Naive thymus-derived CD4-positive, alpha-beta T cell (primary cell): ENCODE measurements at regions of chr4 and their contacts with region 1.

Region 1: GRCh38 chr4:151760712-151761527 is at the start of gene GATB:
- DNase-seq: peak; percentile 67 to 97 (median 93)
- ATAC-seq: peak; percentile 99
- H3K4me3 ChIP-seq: peak within 1 kb of the TSS; percentile 87
- H3K4me3 Mint-ChIP-seq: peak within 1 kb of the TSS; percentile 88 to 99 (median 98)
- H3K27ac ChIP-seq: peak within 1 kb of the TSS; percentile 69
- H3K27ac Mint-ChIP-seq: peak within 1 kb of the TSS; percentile 94 to 99 (median 98)
- H3K4me1 ChIP-seq: peaks cover 9 to 13% of the 10 kb centered on the region in 2 donors
- H3K4me1 Mint-ChIP-seq: peaks cover 7 to 24% (median 18%) of the 10 kb centered on the region in 7 donors
- H3K27me3 ChIP-seq: no peaks in the 10 kb centered on the region
- H3K27me3 Mint-ChIP-seq: peaks cover 0 to 8% (median 4%) of the 10 kb centered on the region in 5 donors
- total RNA-seq, gene GATB: 10.5 to 17.3 (median 14.2) TPM

Region 2: GRCh38 chr4:151015459-151016347 is 745.2 kb before region 1 on chr4:
- CTCF ChIA-PET with region 1: no interaction called
- POLR2A ChIA-PET with region 1: no interaction called
- intact Hi-C with region 1: loop called (anchors 1 to 2 kb)
- DNase-seq: peak; percentile 76 to 89 (median 87)
- ATAC-seq: peak; percentile 88
- H3K4me3 ChIP-seq: peak overlapping the region; percentile 99
- H3K4me3 Mint-ChIP-seq: peak overlapping the region; percentile 95 to 100 (median 99)
- H3K27ac ChIP-seq: peak overlapping the region; percentile 97
- H3K27ac Mint-ChIP-seq: peak overlapping the region; percentile 90 to 100 (median 98)
- H3K4me1 ChIP-seq: peaks cover 18 to 32% of the 10 kb centered on the region in 2 donors
- H3K4me1 Mint-ChIP-seq: peaks cover 20 to 34% (median 32%) of the 10 kb centered on the region in 7 donors
- H3K27me3 ChIP-seq: no peaks in the 10 kb centered on the region
- H3K27me3 Mint-ChIP-seq: no peaks in the 10 kb centered on the region

Region 3: GRCh38 chr4:151117371-151117962 is 643.5 kb before region 1 on chr4:
- CTCF ChIA-PET with region 1: no interaction called
- POLR2A ChIA-PET with region 1: no interaction called
- intact Hi-C with region 1: loop called in 1 of 2 experiments (anchors 5 kb)
- DNase-seq: peak in 8 of 9 donors; percentile 22 to 63 (median 54)
- ATAC-seq: peak; percentile 86
- H3K4me3 ChIP-seq: no peak overlapping the region
- H3K4me3 Mint-ChIP-seq: no peak overlapping the region
- H3K27ac ChIP-seq: no peak overlapping the region
- H3K27ac Mint-ChIP-seq: peak overlapping the region in 1 of 9 donors; percentile 59
- H3K4me1 ChIP-seq: no peaks in the 10 kb centered on the region
- H3K4me1 Mint-ChIP-seq: peaks cover 0 to 8% (median 6%) of the 10 kb centered on the region in 7 donors
- H3K27me3 ChIP-seq: no peaks in the 10 kb centered on the region
- H3K27me3 Mint-ChIP-seq: no peaks in the 10 kb centered on the region

Region 4: GRCh38 chr4:151990201-151990600 is 229.3 kb after region 1 on chr4:
- CTCF ChIA-PET with region 1: no interaction called
- POLR2A ChIA-PET with region 1: no interaction called
- intact Hi-C with region 1: loop called in 1 of 2 experiments (anchors 5 kb)
- DNase-seq: no peak
- ATAC-seq: no peak
- H3K4me3 ChIP-seq: no peak overlapping the region
- H3K4me3 Mint-ChIP-seq: peak overlapping the region in 4 of 10 donors; percentile 18 to 84 (median 76)
- H3K27ac ChIP-seq: no peak overlapping the region
- H3K27ac Mint-ChIP-seq: peak overlapping the region; percentile 77 to 92 (median 90)
- H3K4me1 ChIP-seq: peaks cover 48 to 51% of the 10 kb centered on the region in 2 donors
- H3K4me1 Mint-ChIP-seq: peaks cover 38 to 64% (median 56%) of the 10 kb centered on the region in 7 donors
- H3K27me3 ChIP-seq: no peaks in the 10 kb centered on the region
- H3K27me3 Mint-ChIP-seq: peaks cover 0 to 2% (median 0%) of the 10 kb centered on the region in 5 donors

Region 5: GRCh38 chr4:152255437-152256011 is 494.6 kb after region 1 on chr4:
- CTCF ChIA-PET with region 1: no interaction called
- POLR2A ChIA-PET with region 1: no interaction called
- intact Hi-C with region 1: loop called (anchors 5 kb)
- DNase-seq: peak in 8 of 9 donors; percentile 44 to 64 (median 58)
- ATAC-seq: peak; percentile 89
- H3K4me3 ChIP-seq: no peak overlapping the region
- H3K4me3 Mint-ChIP-seq: no peak overlapping the region
- H3K27ac ChIP-seq: peak overlapping the region; percentile 36
- H3K27ac Mint-ChIP-seq: no peak overlapping the region
- H3K4me1 ChIP-seq: peaks cover 37 to 45% of the 10 kb centered on the region in 2 donors
- H3K4me1 Mint-ChIP-seq: peaks cover 0 to 17% (median 11%) of the 10 kb centered on the region in 7 donors
- H3K27me3 ChIP-seq: no peaks in the 10 kb centered on the region
- H3K27me3 Mint-ChIP-seq: peaks cover 0 to 2% (median 0%) of the 10 kb centered on the region in 5 donors

Region 6: DNA sequence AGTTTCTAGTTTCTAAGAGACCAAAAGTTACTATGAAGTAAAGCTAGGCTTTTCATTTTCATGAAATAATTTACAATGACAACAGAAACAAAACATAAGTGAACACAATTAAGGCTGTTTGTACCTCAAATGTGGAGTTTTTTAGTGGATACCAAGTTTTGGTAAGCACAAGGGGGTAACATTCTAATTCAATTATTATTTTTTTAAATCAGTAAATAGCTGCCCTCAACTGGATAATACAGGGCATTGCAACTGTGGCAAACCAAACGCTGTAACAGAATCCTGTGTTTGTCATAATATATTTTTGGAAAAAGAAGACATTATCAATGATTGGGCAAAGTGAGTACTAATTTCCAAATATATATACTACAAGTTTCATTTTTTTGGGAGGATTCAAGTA is 624.6 kb after region 1 on chr4:
- CTCF ChIA-PET with region 1: no interaction called
- POLR2A ChIA-PET with region 1: no interaction called
- intact Hi-C with region 1: loop called (anchors 1 to 10 kb)
- DNase-seq: peak in 3 of 9 donors; percentile 12 to 23 (median 15)
- ATAC-seq: no peak
- H3K4me3 ChIP-seq: no peak overlapping the region
- H3K4me3 Mint-ChIP-seq: no peak overlapping the region
- H3K27ac ChIP-seq: no peak overlapping the region
- H3K27ac Mint-ChIP-seq: peak overlapping the region in 2 of 9 donors; percentile 38 to 68
- H3K4me1 ChIP-seq: peaks cover 0 to 14% of the 10 kb centered on the region in 2 donors
- H3K4me1 Mint-ChIP-seq: peaks cover 11 to 40% (median 29%) of the 10 kb centered on the region in 7 donors
- H3K27me3 ChIP-seq: no peaks in the 10 kb centered on the region
- H3K27me3 Mint-ChIP-seq: no peaks in the 10 kb centered on the region